ENCODE measurements at regions of chr1 and their contacts with region 1.

Region 1: GRCh38 chr1:233613252-233614174 is at the start of gene KCNK1:
- DNase-seq: peak; percentile 85 to 93
- H3K4me3 ChIP-seq: peak within 1 kb of the TSS; percentile 62
- H3K27ac ChIP-seq: peak within 1 kb of the TSS; percentile 88
- H3K4me1 ChIP-seq: peaks cover 25% of the 10 kb centered on the region
- H3K27me3 ChIP-seq: no peaks in the 10 kb centered on the region
- CTCF ChIP-seq: no peak
- total RNA-seq, gene KCNK1: 57.6 and 60.6 TPM in 2 replicates

Region 2: GRCh38 chr1:233440951-233441401 is 172.5 kb before region 1 on chr1:
- CTCF ChIA-PET with region 1: interaction called, 4 read pairs
- POLR2A ChIA-PET with region 1: no interaction called
- intact Hi-C with region 1: loop called (anchors 2 kb)
- DNase-seq: peak; percentile 47 to 72
- H3K4me3 ChIP-seq: no peak overlapping the region
- H3K27ac ChIP-seq: no peak overlapping the region
- H3K4me1 ChIP-seq: peaks cover 9% of the 10 kb centered on the region; the same call in 1 of the 2 replicates
- H3K27me3 ChIP-seq: no peaks in the 10 kb centered on the region
- CTCF ChIP-seq: peak; percentile 81

Region 3: GRCh38 chr1:233635765-233636502 is 22.4 kb after region 1 on chr1:
- CTCF ChIA-PET with region 1: no interaction called
- POLR2A ChIA-PET with region 1: no interaction called
- intact Hi-C with region 1: loop called (anchors 1 kb)
- DNase-seq: peak; percentile 88 to 98
- H3K4me3 ChIP-seq: no peak overlapping the region; the same call in 1 of the 2 replicates
- H3K27ac ChIP-seq: peak overlapping the region; percentile 64
- H3K4me1 ChIP-seq: peaks cover 34% of the 10 kb centered on the region
- H3K27me3 ChIP-seq: no peaks in the 10 kb centered on the region
- CTCF ChIP-seq: no peak

Region 4: GRCh38 chr1:233668725-233669294 is 55.3 kb after region 1 on chr1:
- CTCF ChIA-PET with region 1: no interaction called
- POLR2A ChIA-PET with region 1: no interaction called
- intact Hi-C with region 1: loop called (anchors 1 kb)
- DNase-seq: peak; percentile 43 to 89
- H3K4me3 ChIP-seq: no peak overlapping the region
- H3K27ac ChIP-seq: peak overlapping the region; percentile 72
- H3K4me1 ChIP-seq: peaks cover 24% of the 10 kb centered on the region
- H3K27me3 ChIP-seq: no peaks in the 10 kb centered on the region
- CTCF ChIP-seq: no peak

Region 5: GRCh38 chr1:233707153-233707879 is 93.8 kb after region 1 on chr1:
- CTCF ChIA-PET with region 1: no interaction called
- POLR2A ChIA-PET with region 1: no interaction called
- intact Hi-C with region 1: loop called (anchors 1 kb)
- DNase-seq: peak; percentile 81 to 99
- H3K4me3 ChIP-seq: peak overlapping the region; percentile 26; the same call in 1 of the 2 replicates
- H3K27ac ChIP-seq: peak overlapping the region; percentile 84
- H3K4me1 ChIP-seq: peaks cover 67% of the 10 kb centered on the region
- H3K27me3 ChIP-seq: no peaks in the 10 kb centered on the region
- CTCF ChIP-seq: no peak

Region 6: GRCh38 chr1:233815865-233816264 is 202.4 kb after region 1 on chr1:
- CTCF ChIA-PET with region 1: no interaction called
- POLR2A ChIA-PET with region 1: no interaction called
- intact Hi-C with region 1: no loop called
- DNase-seq: peak; percentile 26 to 71
- H3K4me3 ChIP-seq: no peak overlapping the region
- H3K27ac ChIP-seq: no peak overlapping the region
- H3K4me1 ChIP-seq: peaks cover 8% of the 10 kb centered on the region
- H3K27me3 ChIP-seq: no peaks in the 10 kb centered on the region
- CTCF ChIP-seq: no peak

Region 7: DNA sequence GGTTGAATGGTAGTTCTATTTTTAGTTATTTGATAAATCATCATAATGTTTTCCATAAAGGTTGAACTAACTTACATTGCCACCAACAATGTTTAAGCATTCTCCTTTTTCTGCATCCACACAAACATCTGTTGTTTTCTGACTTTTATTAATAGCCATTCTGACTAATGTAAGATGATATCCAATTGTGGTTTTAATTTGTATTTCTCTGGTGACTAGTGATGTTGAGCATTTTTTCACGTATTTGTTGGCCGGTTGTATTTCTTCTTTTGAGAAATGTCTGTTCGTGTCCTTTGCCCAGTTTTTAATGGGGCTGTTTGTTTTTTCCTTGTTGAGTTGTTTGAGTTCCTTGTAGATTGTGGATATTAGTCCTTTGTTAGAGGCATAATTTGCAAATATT is 266.3 kb after region 1 on chr1:
- CTCF ChIA-PET with region 1: no interaction called
- POLR2A ChIA-PET with region 1: no interaction called
- intact Hi-C with region 1: no loop called
- DNase-seq: no peak
- H3K4me3 ChIP-seq: no peak overlapping the region
- H3K27ac ChIP-seq: no peak overlapping the region
- H3K4me1 ChIP-seq: no peaks in the 10 kb centered on the region
- H3K27me3 ChIP-seq: no peaks in the 10 kb centered on the region
- CTCF ChIP-seq: no peak

Region 8: GRCh38 chr1:234065794-234066447 is 452.4 kb after region 1 on chr1:
- CTCF ChIA-PET with region 1: no interaction called
- POLR2A ChIA-PET with region 1: no interaction called
- intact Hi-C with region 1: loop called (anchors 10 kb)
- DNase-seq: peak in 1 of 2 experiments; percentile 75
- H3K4me3 ChIP-seq: no peak overlapping the region
- H3K27ac ChIP-seq: no peak overlapping the region
- H3K4me1 ChIP-seq: no peaks in the 10 kb centered on the region
- H3K27me3 ChIP-seq: no peaks in the 10 kb centered on the region
- CTCF ChIP-seq: peak; percentile 83